ENCODE measurements at regions of chr13 and their contacts with region 1.

Region 1: DNA sequence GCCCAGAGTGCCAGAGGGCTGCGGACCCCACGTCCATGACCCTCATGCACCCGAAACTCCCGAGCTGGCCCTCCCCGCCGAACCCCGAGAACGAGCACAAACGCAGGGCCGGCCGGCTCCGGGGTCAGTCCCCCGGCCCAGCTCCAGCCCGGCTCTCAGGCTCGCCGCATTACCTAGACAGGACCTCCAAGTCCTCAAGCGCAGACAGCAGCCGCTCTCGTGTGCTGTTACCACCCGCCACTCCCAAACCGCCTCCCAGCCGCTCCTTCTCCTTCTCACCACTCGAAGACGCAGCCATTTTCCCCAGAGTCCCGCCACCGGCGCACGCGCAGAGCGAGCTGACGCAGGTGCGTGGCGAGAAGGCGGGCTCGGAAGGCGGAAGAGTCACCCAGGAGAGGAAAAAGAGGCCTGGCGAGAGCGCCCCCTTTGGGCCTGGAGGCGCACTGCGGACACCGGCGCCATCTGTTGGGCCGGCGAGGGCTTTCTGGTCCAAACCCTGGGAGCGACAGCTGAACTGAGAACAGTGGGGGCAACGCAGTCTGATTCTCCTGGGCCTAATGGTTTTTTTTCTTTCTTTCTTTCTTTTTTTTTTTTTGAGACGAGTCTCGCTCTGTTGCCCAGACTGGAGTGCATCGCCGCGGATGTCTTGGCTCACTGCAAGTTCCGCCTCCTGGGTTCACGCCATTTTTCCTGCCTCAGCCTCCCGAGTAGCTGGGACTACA is at the start of gene MED4:
- DNase-seq: peak; percentile 75 to 98
- H3K4me3 ChIP-seq: peak within 1 kb of the TSS; percentile 80 to 86
- H3K27ac ChIP-seq: peak within 1 kb of the TSS; percentile 83 to 85
- H3K4me1 ChIP-seq: peaks cover 8 to 15% of the 10 kb centered on the region in 2 donors
- H3K27me3 ChIP-seq: no peaks in the 10 kb centered on the region
- CTCF ChIP-seq: peak; percentile 98 to 99 (median 99)
- total RNA-seq, gene MED4: 8.6 TPM

Region 2: DNA sequence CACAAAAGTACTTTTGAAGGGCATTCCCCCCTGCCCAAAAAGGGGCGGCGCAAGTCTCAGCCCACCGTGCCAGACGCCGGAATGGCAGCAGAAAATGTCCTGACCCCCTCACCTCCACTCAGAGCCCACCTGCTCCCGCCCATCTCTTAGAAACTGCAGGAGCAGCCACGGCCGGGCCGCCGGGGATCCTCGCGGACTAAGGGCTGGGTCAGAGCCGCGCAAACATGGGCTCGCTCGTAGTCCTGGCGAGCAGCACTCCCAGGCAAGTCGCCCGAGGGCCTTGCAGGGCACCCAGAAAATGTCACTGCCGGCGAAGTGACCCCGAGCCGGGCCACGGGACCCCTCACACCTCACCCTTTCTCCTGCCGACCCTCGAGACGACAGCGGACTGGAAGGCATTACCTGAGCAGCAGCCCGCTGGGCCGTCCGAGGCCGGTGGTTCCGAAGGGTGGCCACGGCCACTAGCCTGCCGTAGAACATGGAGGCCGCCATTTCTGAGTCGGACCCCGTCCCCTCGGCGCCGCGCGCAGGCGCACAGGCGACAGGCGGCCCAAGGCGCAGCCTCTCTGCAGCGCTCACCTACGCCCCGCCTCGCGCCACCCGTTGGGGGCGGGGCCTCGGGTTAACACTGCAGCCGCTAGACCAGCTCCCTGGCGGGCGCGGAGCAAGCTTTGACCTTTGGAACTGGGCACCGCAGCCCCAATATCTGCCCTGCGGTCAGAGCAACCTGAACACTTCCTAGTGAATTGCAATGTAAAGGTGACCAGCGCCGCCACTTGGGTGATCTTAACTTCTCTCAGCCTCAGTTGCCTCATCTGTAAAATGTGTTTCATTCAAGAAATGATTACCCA is 93.9 kb before region 1 on chr13 and contains the start of gene SUCLA2:
- intact Hi-C with region 1: loop called (anchors 1 kb)
- DNase-seq: peak; percentile 38 to 93
- H3K4me3 ChIP-seq: peak within 1 kb of the TSS; percentile 91 to 99
- H3K27ac ChIP-seq: peak within 1 kb of the TSS; percentile 74 to 75
- H3K4me1 ChIP-seq: peaks cover 0 to 3% of the 10 kb centered on the region in 2 donors
- H3K27me3 ChIP-seq: no peaks in the 10 kb centered on the region
- CTCF ChIP-seq: no peak
- total RNA-seq, gene SUCLA2: 33.0 TPM

Region 3: GRCh38 chr13:48037346-48038173 is 57.4 kb before region 1 on chr13 and contains the start of gene NUDT15:
- intact Hi-C with region 1: loop called (anchors 2 kb)
- DNase-seq: peak; percentile 61 to 95
- H3K4me3 ChIP-seq: peak within 1 kb of the TSS; percentile 78 to 91
- H3K27ac ChIP-seq: peak within 1 kb of the TSS; percentile 94 to 96
- H3K4me1 ChIP-seq: peaks cover 0 to 11% of the 10 kb centered on the region in 2 donors
- H3K27me3 ChIP-seq: no peaks in the 10 kb centered on the region
- CTCF ChIP-seq: peak; percentile 95 to 97 (median 96)
- total RNA-seq, gene NUDT15: 4.2 TPM

Region 4: DNA sequence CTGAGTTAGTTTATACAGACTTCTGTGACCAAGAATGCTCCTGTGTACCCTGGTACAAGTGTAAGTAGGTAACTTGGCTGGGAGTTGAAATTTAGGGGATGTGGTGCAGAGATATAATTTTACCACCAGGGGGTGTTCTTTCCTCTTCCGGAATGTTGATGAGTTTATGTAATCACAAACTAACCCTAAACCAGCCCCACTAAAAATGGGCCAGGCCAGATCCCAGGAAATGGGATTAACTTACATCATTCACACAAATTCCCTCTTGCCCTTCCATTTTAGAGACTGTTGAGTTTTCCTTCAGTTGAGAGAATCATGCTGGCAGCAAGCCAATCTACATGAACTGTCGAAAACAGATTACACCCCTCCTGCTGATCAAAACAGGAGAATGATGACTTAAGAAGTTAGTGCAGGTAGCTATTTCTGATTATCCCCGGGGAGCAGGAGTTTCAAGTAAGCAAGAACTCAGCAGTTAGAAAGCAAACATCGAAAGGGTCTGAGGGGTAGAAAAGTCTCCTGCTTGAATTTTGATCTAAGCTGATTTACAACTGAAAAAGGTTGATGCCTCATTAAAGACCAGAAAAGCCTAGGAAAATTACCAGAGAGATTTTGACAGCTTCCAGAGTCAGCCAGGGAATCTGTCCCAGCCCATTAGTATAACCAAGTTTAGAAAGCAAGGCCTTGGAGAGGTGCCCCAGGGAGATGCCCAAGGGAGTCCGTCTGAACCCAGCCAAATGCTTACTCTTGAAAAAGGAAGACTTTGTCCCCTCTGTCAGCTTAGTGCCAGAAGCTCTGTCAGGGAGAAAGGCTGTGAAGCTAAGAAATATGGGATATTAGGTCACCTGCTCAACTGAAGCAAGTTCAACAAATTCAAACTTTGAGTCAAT is 32.2 kb after region 1 on chr13:
- intact Hi-C with region 1: loop called (anchors 2 kb)
- DNase-seq: peak in 1 of 2 donors; percentile 80
- H3K4me3 ChIP-seq: peak overlapping the region in 1 of 2 donors; percentile 43
- H3K27ac ChIP-seq: peak overlapping the region; percentile 80 to 91
- H3K4me1 ChIP-seq: peaks cover 8 to 13% of the 10 kb centered on the region in 2 donors
- H3K27me3 ChIP-seq: no peaks in the 10 kb centered on the region
- CTCF ChIP-seq: peak; percentile 61 to 65 (median 64)

Measured in ascending aorta (tissue), 2 donors.